Ovary (tissue), 10 donors: ENCODE measurements at regions of chr4 and their contacts with region 1.

Region 1: GRCh38 chr4:109433205-109434006 is at the start of gene SEC24B:
- DNase-seq: peak; percentile 79 to 88 (median 86)
- H3K4me3 ChIP-seq: peak within 1 kb of the TSS; percentile 62
- H3K27ac ChIP-seq: peak within 1 kb of the TSS; percentile 92 to 97
- H3K4me1 ChIP-seq: peaks cover 9% of the 10 kb centered on the region
- H3K27me3 ChIP-seq: no peaks in the 10 kb centered on the region
- CTCF ChIP-seq: peak; percentile 86 to 98 (median 96)
- EP300 ChIP-seq: no peak
- POLR2A ChIP-seq: peak; percentile 61
- total RNA-seq, gene SEC24B: 31.1 to 40.7 (median 33.8) TPM

Region 2: DNA sequence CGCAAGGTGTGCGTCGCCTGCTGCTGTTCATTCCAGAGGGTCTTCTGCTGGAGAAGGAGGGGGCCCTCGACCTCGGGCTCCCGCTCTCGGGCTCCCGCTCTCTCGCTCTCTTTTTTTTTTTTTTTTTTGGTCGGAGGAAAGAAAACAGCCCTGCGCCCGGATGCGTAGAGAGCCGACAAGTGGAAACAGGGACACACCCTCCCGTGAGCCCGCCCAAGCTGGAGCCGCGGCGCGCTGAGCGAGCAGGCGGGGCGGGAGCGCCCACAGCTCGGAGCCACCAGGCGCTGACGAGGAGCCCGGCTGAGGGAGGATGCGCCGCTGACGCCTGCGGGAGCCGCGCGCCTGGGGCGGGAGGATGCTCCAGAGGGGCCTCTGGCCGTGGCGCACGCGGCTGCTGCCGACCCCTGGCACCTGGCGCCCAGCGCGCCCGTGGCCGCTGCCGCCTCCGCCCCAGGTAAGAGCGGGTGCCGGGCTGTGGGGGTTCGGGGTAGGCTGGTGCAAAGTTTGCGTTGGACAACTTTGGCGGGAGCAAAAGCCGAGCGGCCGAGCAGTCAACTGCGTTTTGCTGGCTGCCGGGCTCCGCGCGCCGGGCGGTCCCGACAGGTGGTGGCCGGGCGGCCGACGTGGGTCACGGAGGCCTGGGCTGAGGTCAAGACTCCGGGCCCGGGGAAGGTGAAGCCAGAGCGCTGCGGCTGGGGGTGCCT is 126.7 kb after region 1 on chr4 and contains the start of gene MCUB:
- intact Hi-C with region 1: loop called in 1 of 4 experiments (anchors 5 kb)
- DNase-seq: peak; percentile 81 to 88 (median 86)
- H3K4me3 ChIP-seq: peak within 1 kb of the TSS; percentile 66
- H3K27ac ChIP-seq: peak within 1 kb of the TSS; percentile 75 to 92
- H3K4me1 ChIP-seq: no peaks in the 10 kb centered on the region
- H3K27me3 ChIP-seq: no peaks in the 10 kb centered on the region
- CTCF ChIP-seq: no peak
- EP300 ChIP-seq: no peak
- POLR2A ChIP-seq: peak; percentile 64
- total RNA-seq, gene MCUB: 7.6 to 11.7 (median 8.8) TPM

Region 3: GRCh38 chr4:109702950-109703663 is 269.7 kb after region 1 on chr4 and contains the start of gene CASP6:
- intact Hi-C with region 1: loop called in 1 of 4 experiments (anchors 10 kb)
- DNase-seq: peak; percentile 83 to 90 (median 84)
- H3K4me3 ChIP-seq: peak within 1 kb of the TSS; percentile 88
- H3K27ac ChIP-seq: peak within 1 kb of the TSS; percentile 63 to 68
- H3K4me1 ChIP-seq: peaks cover 5% of the 10 kb centered on the region
- H3K27me3 ChIP-seq: no peaks in the 10 kb centered on the region
- CTCF ChIP-seq: peak; percentile 23 to 63 (median 57)
- EP300 ChIP-seq: no peak
- POLR2A ChIP-seq: no peak
- total RNA-seq, gene CASP6: 11.2 to 19.3 (median 13.1) TPM

Region 4: GRCh38 chr4:109729718-109730618 is 296.6 kb after region 1 on chr4 and contains the start of gene PLA2G12A:
- intact Hi-C with region 1: loop called in 2 of 4 experiments (anchors 5 to 10 kb)
- DNase-seq: peak; percentile 63 to 84 (median 81)
- H3K4me3 ChIP-seq: peak within 1 kb of the TSS; percentile 83
- H3K27ac ChIP-seq: peak within 1 kb of the TSS; percentile 72 to 76
- H3K4me1 ChIP-seq: no peaks in the 10 kb centered on the region
- H3K27me3 ChIP-seq: no peaks in the 10 kb centered on the region
- CTCF ChIP-seq: no peak
- EP300 ChIP-seq: no peak
- POLR2A ChIP-seq: peak; percentile 52
- total RNA-seq, gene PLA2G12A: 31.2 to 84.3 (median 35.9) TPM

Region 5: DNA sequence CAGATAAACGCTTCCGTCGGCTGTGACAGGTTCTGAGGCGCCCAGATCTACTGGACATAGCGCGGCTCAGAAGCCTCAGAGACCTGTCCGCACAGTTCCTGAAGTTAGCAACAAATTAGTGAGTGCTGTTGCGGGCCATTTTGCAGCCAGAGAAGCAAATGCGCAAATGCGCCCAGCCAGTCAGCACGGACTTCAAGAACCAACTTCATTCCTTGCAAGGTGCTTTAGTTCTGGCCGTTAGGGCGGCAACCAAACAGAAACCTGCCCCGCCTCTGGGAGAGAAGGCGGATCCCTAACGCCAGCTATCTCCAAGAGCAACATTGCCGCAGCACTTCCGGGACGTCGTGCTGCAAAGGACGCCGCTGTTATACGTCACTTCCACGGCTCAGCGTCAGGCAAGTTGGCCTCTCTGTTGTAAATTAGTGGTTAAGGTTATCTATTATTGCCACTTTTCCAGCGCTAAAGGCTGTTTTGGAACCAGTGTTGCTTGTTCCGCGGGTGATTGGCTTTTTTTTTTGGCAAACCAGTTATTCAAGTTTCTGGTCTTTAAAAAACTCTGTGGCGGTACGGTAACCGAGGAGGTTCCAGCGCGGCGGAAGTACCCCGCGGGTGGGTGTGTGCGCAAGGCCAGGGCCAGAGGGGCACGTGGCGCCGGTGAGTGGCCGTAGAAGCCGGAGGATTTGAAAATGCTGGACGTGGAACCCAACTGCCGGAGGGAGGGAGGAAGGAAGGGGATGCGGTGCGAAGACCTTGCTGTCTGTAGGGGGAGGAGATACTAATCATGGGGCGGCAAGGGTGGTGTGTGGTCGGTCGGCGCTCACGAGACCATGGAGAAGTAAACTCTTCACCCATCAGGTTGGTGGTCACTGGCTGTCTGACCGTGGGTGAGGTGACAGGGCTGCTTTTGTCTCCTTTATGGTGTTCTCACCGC is 382.0 kb after region 1 on chr4 and contains the start of gene GAR1:
- intact Hi-C with region 1: loop called in 2 of 4 experiments (anchors 5 kb)
- DNase-seq: peak; percentile 83 to 87 (median 84)
- H3K4me3 ChIP-seq: peak within 1 kb of the TSS; percentile 85
- H3K27ac ChIP-seq: peak within 1 kb of the TSS; percentile 23 to 72
- H3K4me1 ChIP-seq: peaks cover 4% of the 10 kb centered on the region
- H3K27me3 ChIP-seq: no peaks in the 10 kb centered on the region
- CTCF ChIP-seq: no peak
- EP300 ChIP-seq: no peak
- POLR2A ChIP-seq: no peak
- total RNA-seq, gene GAR1: 4.3 to 22.5 (median 15.7) TPM